Endothelial cell of umbilical vein (primary cell): ENCODE measurements at regions of chr4 and their contacts with region 1.

Region 1: DNA sequence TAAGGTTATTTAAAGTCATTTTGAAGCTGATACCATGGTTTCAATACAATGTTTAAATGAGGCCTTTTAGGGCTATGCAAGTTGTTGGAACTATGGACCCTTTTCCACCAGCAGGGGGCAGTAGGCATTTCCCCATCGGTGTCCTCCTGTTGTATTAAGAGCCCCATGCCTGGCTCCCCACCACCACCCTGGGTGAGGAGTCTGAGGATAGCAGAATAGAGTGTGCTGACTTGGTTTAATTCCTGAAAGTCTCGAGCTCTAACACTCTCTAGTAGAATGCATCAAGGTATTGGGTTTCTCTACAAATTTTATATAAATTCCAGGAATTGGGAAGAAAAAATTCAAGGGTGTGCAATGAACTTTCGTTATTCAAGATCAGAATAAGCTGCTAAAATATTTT is 234.8 kb upstream of the JADE1 start:
- DNase-seq: peak; percentile 49
- H3K4me3 ChIP-seq: no peak overlapping the region
- H3K27ac ChIP-seq: no peak overlapping the region
- H3K4me1 ChIP-seq: peaks cover 38% of the 10 kb centered on the region
- H3K27me3 ChIP-seq: no peaks in the 10 kb centered on the region
- CTCF ChIP-seq: peak; percentile 44 to 59
- POLR2A ChIP-seq: no peak

Region 2: GRCh38 chr4:128191115-128191781 is 383.5 kb before region 1 on chr4:
- CTCF ChIA-PET with region 1: no interaction called
- POLR2A ChIA-PET with region 1: no interaction called
- dilution Hi-C with region 1: no loop called
- intact Hi-C with region 1: loop called (anchors 5 kb)
- DNase-seq: peak; percentile 76
- H3K4me3 ChIP-seq: no peak overlapping the region
- H3K27ac ChIP-seq: no peak overlapping the region
- H3K4me1 ChIP-seq: no peaks in the 10 kb centered on the region
- H3K27me3 ChIP-seq: no peaks in the 10 kb centered on the region
- CTCF ChIP-seq: peak; percentile 71 to 75
- POLR2A ChIP-seq: no peak

Region 3: GRCh38 chr4:128502818-128503527 is 71.7 kb before region 1 on chr4:
- CTCF ChIA-PET with region 1: no interaction called
- POLR2A ChIA-PET with region 1: no interaction called
- dilution Hi-C with region 1: no loop called
- intact Hi-C with region 1: loop called (anchors 1 kb)
- DNase-seq: peak; percentile 91
- H3K4me3 ChIP-seq: no peak overlapping the region
- H3K27ac ChIP-seq: peak overlapping the region; percentile 62
- H3K4me1 ChIP-seq: peaks cover 22% of the 10 kb centered on the region
- H3K27me3 ChIP-seq: no peaks in the 10 kb centered on the region
- CTCF ChIP-seq: no peak
- POLR2A ChIP-seq: peak; percentile 69

Region 4: DNA sequence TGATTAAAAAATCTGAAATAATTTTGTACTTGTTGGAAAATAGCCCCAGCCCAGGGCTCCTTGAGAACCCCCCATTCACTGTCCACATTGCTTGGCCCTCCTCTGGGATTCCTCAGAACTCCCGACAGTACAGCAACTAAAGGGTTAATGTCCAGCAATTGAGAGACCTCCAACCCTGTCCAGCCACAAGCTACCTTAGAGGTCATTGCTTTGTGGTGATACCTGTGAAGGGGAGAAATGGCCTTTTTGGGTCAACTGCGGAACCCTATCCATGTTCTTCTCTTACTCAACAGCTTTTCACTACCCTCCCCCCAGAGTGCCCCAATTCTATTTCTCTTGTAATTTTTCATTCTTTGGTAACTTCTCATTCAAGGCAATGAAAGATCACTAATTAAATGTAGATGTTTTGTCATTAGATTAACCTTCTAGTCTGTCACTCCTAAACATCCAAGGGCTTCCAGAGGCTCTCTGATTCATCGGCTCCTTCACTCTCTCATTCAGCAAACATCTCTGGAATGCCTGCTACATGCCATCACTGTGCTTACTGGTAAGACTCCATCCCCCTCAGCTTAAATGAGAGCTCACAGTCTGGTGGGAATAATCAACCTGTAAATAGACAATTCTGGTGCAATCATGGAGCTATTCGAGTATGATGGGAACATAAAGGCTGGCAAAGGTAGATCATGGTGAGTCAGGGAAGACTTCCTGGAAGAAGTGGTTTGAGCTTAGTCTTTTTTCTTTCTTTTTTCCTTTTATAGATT is 45.7 kb before region 1 on chr4:
- CTCF ChIA-PET with region 1: no interaction called
- POLR2A ChIA-PET with region 1: no interaction called
- dilution Hi-C with region 1: no loop called
- intact Hi-C with region 1: loop called (anchors 1 kb)
- DNase-seq: peak; percentile 88
- H3K4me3 ChIP-seq: no peak overlapping the region
- H3K27ac ChIP-seq: peak overlapping the region; percentile 95
- H3K4me1 ChIP-seq: peaks cover 29% of the 10 kb centered on the region
- H3K27me3 ChIP-seq: no peaks in the 10 kb centered on the region
- CTCF ChIP-seq: no peak
- POLR2A ChIP-seq: no peak

Region 5: GRCh38 chr4:128558896-128559679 is 15.6 kb before region 1 on chr4:
- CTCF ChIA-PET with region 1: interaction called, 7 read pairs
- POLR2A ChIA-PET with region 1: no interaction called
- dilution Hi-C with region 1: no loop called
- intact Hi-C with region 1: loop called (anchors 1 kb)
- DNase-seq: peak; percentile 50
- H3K4me3 ChIP-seq: no peak overlapping the region
- H3K27ac ChIP-seq: no peak overlapping the region
- H3K4me1 ChIP-seq: peaks cover 17% of the 10 kb centered on the region
- H3K27me3 ChIP-seq: no peaks in the 10 kb centered on the region
- CTCF ChIP-seq: no peak
- POLR2A ChIP-seq: no peak

Region 6: GRCh38 chr4:128863312-128864075 is 288.8 kb after region 1 on chr4:
- CTCF ChIA-PET with region 1: interaction called, 4 read pairs
- POLR2A ChIA-PET with region 1: no interaction called
- dilution Hi-C with region 1: no loop called
- intact Hi-C with region 1: loop called (anchors 2 kb)
- DNase-seq: peak; percentile 81
- H3K4me3 ChIP-seq: no peak overlapping the region
- H3K27ac ChIP-seq: no peak overlapping the region
- H3K4me1 ChIP-seq: peaks cover 11% of the 10 kb centered on the region
- H3K27me3 ChIP-seq: no peaks in the 10 kb centered on the region
- CTCF ChIP-seq: peak; percentile 78 to 83
- POLR2A ChIP-seq: no peak

Region 7: DNA sequence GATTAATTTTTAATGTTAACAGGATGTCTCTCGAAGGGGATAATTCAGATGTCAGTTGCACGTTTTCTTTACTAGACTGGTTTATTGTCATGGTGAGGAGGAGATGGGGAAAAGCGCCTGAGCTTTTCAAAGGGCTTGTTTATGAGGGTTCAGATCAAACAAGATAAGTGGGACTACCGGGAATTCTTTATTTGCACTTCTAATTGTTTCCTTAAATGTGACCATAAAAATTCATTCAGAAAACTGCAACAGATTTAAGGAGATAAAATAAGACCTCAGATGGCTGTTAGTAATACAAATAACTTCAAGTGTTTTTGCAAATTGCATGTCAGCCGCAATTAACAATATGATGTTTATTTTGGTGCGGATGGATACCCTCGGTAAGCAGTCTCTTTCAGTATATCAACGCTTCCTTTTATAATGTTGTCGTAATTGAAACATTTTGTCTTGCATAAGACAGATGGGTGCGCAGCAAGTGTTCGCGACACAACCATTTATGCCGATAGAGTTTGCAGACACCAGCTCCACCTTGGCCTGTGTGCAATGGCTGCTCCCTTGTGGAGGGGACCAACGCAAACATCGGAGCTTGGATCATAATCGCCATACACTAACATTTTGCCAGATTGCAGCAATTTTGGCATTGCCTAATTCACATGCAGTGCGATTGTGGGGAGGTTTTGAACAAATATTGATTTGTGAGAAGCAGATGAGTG is 672.3 kb after region 1 on chr4:
- CTCF ChIA-PET with region 1: no interaction called
- POLR2A ChIA-PET with region 1: no interaction called
- dilution Hi-C with region 1: no loop called
- intact Hi-C with region 1: no loop called
- DNase-seq: no peak
- H3K4me3 ChIP-seq: no peak overlapping the region
- H3K27ac ChIP-seq: no peak overlapping the region
- H3K4me1 ChIP-seq: no peaks in the 10 kb centered on the region
- H3K27me3 ChIP-seq: no peaks in the 10 kb centered on the region
- CTCF ChIP-seq: no peak
- POLR2A ChIP-seq: no peak